HEK293 (cell line): ENCODE measurements at regions of chr2 and their contacts with region 1.

Region 1: GRCh38 chr2:71068218-71069035 is at the start of gene NAGK:
- H3K4me3 ChIP-seq: peak within 1 kb of the TSS; percentile 65
- H3K27ac ChIP-seq: peak within 1 kb of the TSS; percentile 31
- H3K4me1 ChIP-seq: no peaks in the 10 kb centered on the region; the same call in 1 of the 2 replicates
- CTCF ChIP-seq: peak; percentile 72

Region 2: GRCh38 chr2:71082402-71083252 is 14.2 kb after region 1 on chr2:
- CTCF ChIA-PET with region 1: interaction called, 7 read pairs
- POLR2A ChIA-PET with region 1: interaction called, 13 read pairs
- H3K4me3 ChIP-seq: no peak overlapping the region
- H3K27ac ChIP-seq: no peak overlapping the region
- H3K4me1 ChIP-seq: no peaks in the 10 kb centered on the region
- CTCF ChIP-seq: no peak